ENCODE measurements at regions of chr11 and their contacts with region 1.

Region 1: GRCh38 chr11:44775366-44775984 is 48.7 kb downstream of the TSPAN18 start:
- DNase-seq: peak; percentile 67
- ATAC-seq: peak; percentile 27

Region 2: GRCh38 chr11:44427432-44427831 is 348.0 kb before region 1 on chr11:
- intact Hi-C with region 1: no loop called
- DNase-seq: no peak
- ATAC-seq: no peak

Region 3: GRCh38 chr11:44893846-44894617 is 118.6 kb after region 1 on chr11:
- intact Hi-C with region 1: loop called (anchors 5 kb)
- DNase-seq: peak; percentile 75
- ATAC-seq: peak; percentile 89